Activated T-helper 1 cell treated with anti-CD3 and anti-CD28 coated beads, Interleukin-12 subunit alpha, Interleukin-12 subunit beta, Interleukin-2, Interleukin-4 antibody, amounts not matched to agents 30 ng/mL and 10 ng/mL and 1 ng/mL, durations not matched to agents 14 hours and 24 hours and 36 hours (primary cell): ENCODE measurements at regions of chr3 and their contacts with region 1.

Region 1: DNA sequence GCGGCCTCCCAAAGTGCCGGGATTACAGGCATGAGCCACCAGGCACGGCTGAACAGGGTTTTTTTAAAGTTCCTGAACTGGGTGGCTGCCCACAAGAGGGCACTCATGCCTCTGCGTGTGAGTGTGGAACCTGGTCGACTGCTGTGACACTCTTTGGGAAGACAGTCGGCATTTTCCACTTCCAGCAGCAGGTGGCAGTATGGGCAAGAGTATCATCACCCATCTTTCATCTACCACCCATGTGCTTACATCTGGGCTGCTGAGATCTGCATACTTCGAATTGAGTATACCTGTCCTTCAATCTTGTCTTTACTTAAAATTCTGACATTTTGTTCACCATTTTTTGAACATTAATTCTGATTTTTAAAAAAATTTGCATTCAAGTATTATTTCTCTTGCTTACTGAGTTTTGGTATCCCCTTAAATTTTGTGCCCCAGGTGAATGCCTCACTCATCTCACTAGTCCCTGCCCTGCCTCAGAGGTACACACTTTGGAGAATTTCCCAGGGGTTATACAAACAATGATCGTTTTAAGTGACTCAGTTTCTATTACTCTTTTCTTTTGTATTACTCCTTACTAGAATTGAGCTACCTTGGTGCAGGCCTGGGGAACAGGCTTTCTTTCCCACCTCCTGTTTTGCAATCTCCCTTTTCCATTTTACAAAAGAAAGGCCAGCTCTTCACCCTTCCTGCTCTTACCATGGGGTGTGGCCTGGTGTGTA is 11.8 kb downstream of the CLEC3B start:
- DNase-seq: peak; percentile 84
- H3K4me3 Mint-ChIP-seq: no peak overlapping the region
- H3K27ac Mint-ChIP-seq: no peak overlapping the region
- H3K4me1 Mint-ChIP-seq: peaks cover 42% of the 10 kb centered on the region
- H3K27me3 Mint-ChIP-seq: peaks cover 30% of the 10 kb centered on the region

Region 2: GRCh38 chr3:44492496-44492895 is 545.4 kb before region 1 on chr3:
- intact Hi-C with region 1: no loop called
- DNase-seq: no peak
- H3K4me3 Mint-ChIP-seq: no peak overlapping the region
- H3K27ac Mint-ChIP-seq: no peak overlapping the region
- H3K4me1 Mint-ChIP-seq: no peaks in the 10 kb centered on the region
- H3K27me3 Mint-ChIP-seq: no peaks in the 10 kb centered on the region

Region 3: DNA sequence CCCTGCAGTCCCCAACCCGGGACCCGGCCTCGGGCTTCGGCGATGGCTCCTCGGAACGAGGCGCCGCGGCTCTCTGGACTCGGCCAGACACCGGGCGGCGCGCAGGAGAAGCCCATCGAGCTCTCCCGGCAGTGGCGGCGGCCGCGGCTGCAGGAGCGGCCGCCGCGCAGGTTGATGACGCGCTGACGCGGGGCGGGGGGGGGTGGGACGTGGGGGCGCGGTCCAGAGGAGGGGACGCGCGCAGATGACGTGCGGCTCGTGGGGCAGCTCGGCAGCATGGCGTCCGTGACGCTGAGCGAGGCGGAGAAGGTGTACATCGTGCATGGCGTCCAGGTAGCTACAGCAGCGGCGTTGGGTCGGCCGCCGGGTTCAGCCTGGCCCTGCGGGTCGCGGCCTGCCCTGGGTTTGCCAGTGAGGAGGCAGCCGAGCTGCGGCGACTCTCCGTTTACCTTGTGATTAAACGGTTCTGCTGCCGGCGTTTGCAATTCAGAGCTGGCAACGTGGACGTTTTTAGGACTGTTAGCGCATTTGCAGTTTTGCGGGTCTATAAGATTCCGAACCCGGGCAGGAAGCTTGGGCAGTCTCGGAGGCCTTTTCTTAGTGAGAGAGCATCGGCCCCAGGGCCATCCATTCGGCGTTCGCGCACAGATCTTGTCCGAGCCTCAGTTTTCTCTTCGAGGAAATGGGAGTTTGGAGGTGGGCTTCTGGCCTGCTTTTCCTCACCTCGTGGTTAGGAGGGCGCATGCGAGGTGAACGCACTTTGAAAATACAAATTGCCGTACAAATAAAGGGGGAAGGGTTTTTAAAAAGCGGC is 61.7 kb before region 1 on chr3 and contains the starts of genes EXOSC7 and ZDHHC3:
- intact Hi-C with region 1: loop called (anchors 2 kb)
- DNase-seq: peak; percentile 81
- H3K4me3 Mint-ChIP-seq: peak within 1 kb of the TSS; percentile 99
- H3K27ac Mint-ChIP-seq: peak within 1 kb of the TSS; percentile 96
- H3K4me1 Mint-ChIP-seq: peaks cover 58% of the 10 kb centered on the region
- H3K27me3 Mint-ChIP-seq: no peaks in the 10 kb centered on the region
- total RNA-seq, gene EXOSC7: 93.6 and 94.4 TPM in 2 replicates
- total RNA-seq, gene ZDHHC3: 46.6 and 47.5 TPM in 2 replicates

Region 4: GRCh38 chr3:45113625-45114050 is 75.7 kb after region 1 on chr3:
- intact Hi-C with region 1: loop called (anchors 2 kb)
- DNase-seq: no peak
- H3K4me3 Mint-ChIP-seq: no peak overlapping the region
- H3K27ac Mint-ChIP-seq: peak overlapping the region; percentile 42
- H3K4me1 Mint-ChIP-seq: peaks cover 57% of the 10 kb centered on the region
- H3K27me3 Mint-ChIP-seq: peaks cover 41% of the 10 kb centered on the region

Region 5: GRCh38 chr3:45224824-45225464 is 187.0 kb after region 1 on chr3:
- intact Hi-C with region 1: loop called (anchors 1 kb)
- DNase-seq: peak; percentile 4
- H3K4me3 Mint-ChIP-seq: peak overlapping the region; percentile 79
- H3K27ac Mint-ChIP-seq: peak overlapping the region; percentile 80
- H3K4me1 Mint-ChIP-seq: peaks cover 17% of the 10 kb centered on the region
- H3K27me3 Mint-ChIP-seq: peaks cover 75% of the 10 kb centered on the region

Region 6: GRCh38 chr3:45499529-45499928 is 461.6 kb after region 1 on chr3:
- intact Hi-C with region 1: loop called (anchors 1 kb)
- DNase-seq: no peak
- H3K4me3 Mint-ChIP-seq: no peak overlapping the region
- H3K27ac Mint-ChIP-seq: no peak overlapping the region
- H3K4me1 Mint-ChIP-seq: no peaks in the 10 kb centered on the region
- H3K27me3 Mint-ChIP-seq: no peaks in the 10 kb centered on the region

Region 7: GRCh38 chr3:45656575-45657363 is 618.9 kb after region 1 on chr3:
- intact Hi-C with region 1: loop called (anchors 1 kb)
- DNase-seq: peak; percentile 72
- H3K4me3 Mint-ChIP-seq: no peak overlapping the region
- H3K27ac Mint-ChIP-seq: no peak overlapping the region
- H3K4me1 Mint-ChIP-seq: peaks cover 12% of the 10 kb centered on the region
- H3K27me3 Mint-ChIP-seq: no peaks in the 10 kb centered on the region